ENCODE measurements at regions of chr3 and their contacts with region 1.

Region 1: GRCh38 chr3:50542177-50543034 is 25.1 kb downstream of the C3orf18 start:
- DNase-seq: peak in 4 of 5 donors; percentile 51 to 64 (median 56)
- ATAC-seq: peak; percentile 54 to 82 (median 68)
- H3K4me3 ChIP-seq: no peak overlapping the region
- H3K27ac ChIP-seq: no peak overlapping the region
- H3K4me1 ChIP-seq: no peaks in the 10 kb centered on the region
- H3K27me3 ChIP-seq: no peaks in the 10 kb centered on the region
- CTCF ChIP-seq: peak; percentile 80 to 97 (median 90)
- POLR2A ChIP-seq: no peak

Region 2: DNA sequence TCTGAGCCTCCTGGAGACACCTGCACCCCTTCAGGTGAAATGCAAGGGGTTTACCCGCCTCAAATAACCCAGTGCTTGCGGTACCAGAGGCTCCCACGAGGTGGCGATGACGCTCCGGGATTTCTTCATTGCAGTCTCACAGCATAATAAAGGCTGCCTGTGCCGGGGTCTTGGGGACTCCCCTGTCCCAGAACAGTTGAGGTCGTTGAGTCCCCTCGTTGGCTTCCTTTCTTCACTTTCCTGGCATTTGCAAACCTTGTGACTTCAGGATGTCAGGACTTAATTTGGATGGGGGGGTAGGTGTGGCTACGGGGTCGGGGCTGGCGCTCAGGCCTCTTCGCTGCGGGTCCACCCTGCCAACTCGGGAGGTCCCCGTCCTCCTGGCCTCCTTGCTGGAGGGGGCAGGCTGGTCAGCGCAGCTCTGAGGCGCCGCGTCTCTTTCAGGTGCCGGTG is 349.7 kb before region 1 on chr3:
- intact Hi-C with region 1: loop called in 1 of 10 experiments (anchors 10 kb)
- DNase-seq: peak in 4 of 5 donors; percentile 44 to 64 (median 60)
- ATAC-seq: peak in 2 of 4 donors; percentile 17 to 28
- H3K4me3 ChIP-seq: no peak overlapping the region
- H3K27ac ChIP-seq: no peak overlapping the region
- H3K4me1 ChIP-seq: peaks cover 3 to 29% (median 14%) of the 10 kb centered on the region in 12 donors
- H3K27me3 ChIP-seq: peaks cover 12 to 35% (median 21%) of the 10 kb centered on the region in 9 donors
- CTCF ChIP-seq: peak; percentile 82 to 94 (median 88)
- POLR2A ChIP-seq: no peak

Region 3: DNA sequence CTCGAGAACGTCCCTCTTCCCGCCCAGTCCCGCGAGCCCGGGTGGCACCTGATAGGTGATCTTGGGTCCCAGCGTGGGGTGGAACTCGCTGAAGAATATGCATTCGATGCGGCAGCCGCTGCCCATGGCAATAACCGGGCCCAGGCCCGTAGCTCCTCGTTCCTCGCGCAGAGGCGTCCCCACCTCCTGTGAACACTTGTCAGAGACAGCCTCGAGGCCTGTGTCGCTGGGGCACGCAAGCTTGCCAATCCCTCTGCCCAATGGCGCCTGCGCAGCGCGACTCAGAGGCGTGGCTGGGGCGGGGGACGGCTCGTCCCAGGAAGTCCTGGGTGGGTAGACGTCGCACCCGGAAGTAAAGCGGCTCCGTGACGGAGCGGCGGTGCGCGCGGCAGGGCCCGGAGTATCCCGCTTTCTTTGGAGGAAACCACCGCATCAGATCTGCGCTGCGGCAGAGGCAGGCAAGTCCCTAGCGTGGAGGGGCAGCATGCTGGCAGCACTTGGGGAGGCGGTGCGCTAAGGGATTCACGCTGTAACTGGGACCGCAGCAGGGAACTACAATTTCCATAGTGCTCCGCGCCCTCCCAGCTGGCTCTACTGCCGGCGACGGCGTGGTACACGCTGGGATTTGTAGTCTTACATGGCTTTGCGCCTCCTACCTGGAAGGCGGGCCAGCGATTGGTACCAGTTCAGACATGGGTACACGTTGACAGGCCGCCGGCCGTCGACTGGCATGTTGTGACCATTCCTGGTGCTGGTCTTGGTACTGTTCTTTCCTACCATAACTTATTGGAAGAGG is 191.7 kb before region 1 on chr3 and contains the starts of genes CYB561D2 and NPRL2:
- intact Hi-C with region 1: loop called (anchors 1 to 2 kb)
- DNase-seq: peak; percentile 96 to 99 (median 98)
- ATAC-seq: peak; percentile 88 to 97 (median 96)
- H3K4me3 ChIP-seq: peak within 1 kb of the TSS; percentile 24 to 95 (median 84)
- H3K27ac ChIP-seq: peak within 1 kb of the TSS; percentile 91 to 98 (median 95)
- H3K4me1 ChIP-seq: peaks cover 7 to 63% (median 40%) of the 10 kb centered on the region in 12 donors
- H3K27me3 ChIP-seq: no peaks in the 10 kb centered on the region
- CTCF ChIP-seq: peak in 2 of 12 donors; percentile 5 to 8
- POLR2A ChIP-seq: peak; percentile 58 to 86
- total RNA-seq, gene CYB561D2: 4.9 to 16.5 (median 7.8) TPM
- total RNA-seq, gene NPRL2: 12.0 to 18.4 (median 15.3) TPM

Region 4: GRCh38 chr3:50365080-50365841 is 177.1 kb before region 1 on chr3:
- intact Hi-C with region 1: loop called in 3 of 10 experiments (anchors 5 kb)
- DNase-seq: peak; percentile 82 to 93 (median 85)
- ATAC-seq: peak; percentile 44 to 89 (median 84)
- H3K4me3 ChIP-seq: peak overlapping the region; percentile 1 to 66 (median 57)
- H3K27ac ChIP-seq: peak overlapping the region in 5 of 12 donors; percentile 9 to 73 (median 44)
- H3K4me1 ChIP-seq: peaks cover 0 to 14% (median 8%) of the 10 kb centered on the region in 12 donors
- H3K27me3 ChIP-seq: no peaks in the 10 kb centered on the region
- CTCF ChIP-seq: no peak
- POLR2A ChIP-seq: no peak

Region 5: GRCh38 chr3:50436114-50436674 is 106.2 kb before region 1 on chr3:
- intact Hi-C with region 1: loop called (anchors 1 to 2 kb)
- DNase-seq: peak; percentile 52 to 84 (median 63)
- ATAC-seq: peak; percentile 76 to 88 (median 83)
- H3K4me3 ChIP-seq: no peak overlapping the region
- H3K27ac ChIP-seq: no peak overlapping the region
- H3K4me1 ChIP-seq: peaks cover 0 to 6% (median 2%) of the 10 kb centered on the region in 12 donors
- H3K27me3 ChIP-seq: no peaks in the 10 kb centered on the region
- CTCF ChIP-seq: peak; percentile 71 to 93 (median 85)
- POLR2A ChIP-seq: no peak

Region 6: DNA sequence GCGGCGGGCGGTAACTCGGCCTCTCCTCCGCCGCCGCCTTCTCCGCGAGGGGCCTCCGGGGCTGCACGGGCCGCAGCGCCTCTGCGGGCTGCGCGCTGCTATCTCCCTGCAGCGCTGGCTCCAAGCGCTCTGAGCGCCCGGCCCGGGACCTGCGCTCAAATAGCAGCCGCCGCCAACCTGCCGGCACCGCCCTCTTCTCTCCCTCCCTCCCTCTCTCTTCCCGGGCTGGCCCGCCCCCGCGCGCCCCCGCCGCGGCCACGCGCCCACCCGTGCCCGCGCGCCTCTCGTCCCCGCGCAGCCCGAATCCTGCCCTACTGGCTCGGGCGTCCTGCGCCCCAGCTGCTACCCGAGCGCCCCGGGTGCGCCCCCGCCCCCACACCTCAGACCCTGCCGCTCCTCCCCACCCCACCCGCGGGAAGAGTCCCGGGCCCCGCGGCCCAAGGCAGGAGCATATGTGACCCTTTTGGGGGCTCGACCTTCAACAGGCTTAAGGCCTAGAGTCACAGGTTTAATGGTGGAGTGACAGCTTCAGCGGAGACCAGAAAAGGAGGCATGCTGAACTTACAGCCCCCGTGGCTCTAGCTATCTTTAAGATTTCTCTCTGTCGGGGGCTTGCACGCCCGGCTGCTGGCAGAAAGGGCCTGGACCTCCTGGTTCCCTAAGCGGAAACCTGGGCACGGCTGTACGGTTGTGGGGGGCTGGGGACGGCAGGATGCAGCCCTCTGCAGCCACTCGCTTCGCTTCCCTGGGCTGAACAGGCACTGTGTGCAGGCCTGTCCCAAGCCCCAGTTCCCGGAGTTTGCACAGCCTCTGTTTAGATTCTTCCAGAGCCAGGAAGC is 38.7 kb before region 1 on chr3 and contains the start of gene CACNA2D2:
- intact Hi-C with region 1: no loop called
- DNase-seq: peak; percentile 60 to 81 (median 67)
- ATAC-seq: peak; percentile 41 to 86 (median 82)
- H3K4me3 ChIP-seq: peak within 1 kb of the TSS; percentile 37 to 82 (median 60)
- H3K27ac ChIP-seq: peak within 1 kb of the TSS in 10 of 12 donors; percentile 14 to 77 (median 51)
- H3K4me1 ChIP-seq: peaks cover 0 to 17% (median 7%) of the 10 kb centered on the region in 12 donors
- H3K27me3 ChIP-seq: peaks cover 0 to 23% (median 2%) of the 10 kb centered on the region in 9 donors
- CTCF ChIP-seq: peak in 1 of 12 donors; percentile 12
- POLR2A ChIP-seq: peak in 1 of 2 donors; percentile 51
- total RNA-seq, gene CACNA2D2: 0.95 to 3.6 (median 2.7) TPM